OCI-LY7 (cell line): ENCODE measurements at regions of chr4 and their contacts with region 1.

Region 1: GRCh38 chr4:85696661-85697060 is 221.7 kb downstream of the ARHGAP24 start:
- DNase-seq: no peak
- H3K4me3 ChIP-seq: no peak overlapping the region
- H3K27ac ChIP-seq: no peak overlapping the region
- H3K4me1 ChIP-seq: peaks cover 37% of the 10 kb centered on the region
- CTCF ChIP-seq: no peak

Region 2: GRCh38 chr4:85438031-85438430 is 258.6 kb before region 1 on chr4:
- CTCF ChIA-PET with region 1: no interaction called
- POLR2A ChIA-PET with region 1: no interaction called
- intact Hi-C with region 1: no loop called
- DNase-seq: no peak
- H3K4me3 ChIP-seq: no peak overlapping the region
- H3K27ac ChIP-seq: no peak overlapping the region
- H3K4me1 ChIP-seq: no peaks in the 10 kb centered on the region
- CTCF ChIP-seq: no peak

Region 3: DNA sequence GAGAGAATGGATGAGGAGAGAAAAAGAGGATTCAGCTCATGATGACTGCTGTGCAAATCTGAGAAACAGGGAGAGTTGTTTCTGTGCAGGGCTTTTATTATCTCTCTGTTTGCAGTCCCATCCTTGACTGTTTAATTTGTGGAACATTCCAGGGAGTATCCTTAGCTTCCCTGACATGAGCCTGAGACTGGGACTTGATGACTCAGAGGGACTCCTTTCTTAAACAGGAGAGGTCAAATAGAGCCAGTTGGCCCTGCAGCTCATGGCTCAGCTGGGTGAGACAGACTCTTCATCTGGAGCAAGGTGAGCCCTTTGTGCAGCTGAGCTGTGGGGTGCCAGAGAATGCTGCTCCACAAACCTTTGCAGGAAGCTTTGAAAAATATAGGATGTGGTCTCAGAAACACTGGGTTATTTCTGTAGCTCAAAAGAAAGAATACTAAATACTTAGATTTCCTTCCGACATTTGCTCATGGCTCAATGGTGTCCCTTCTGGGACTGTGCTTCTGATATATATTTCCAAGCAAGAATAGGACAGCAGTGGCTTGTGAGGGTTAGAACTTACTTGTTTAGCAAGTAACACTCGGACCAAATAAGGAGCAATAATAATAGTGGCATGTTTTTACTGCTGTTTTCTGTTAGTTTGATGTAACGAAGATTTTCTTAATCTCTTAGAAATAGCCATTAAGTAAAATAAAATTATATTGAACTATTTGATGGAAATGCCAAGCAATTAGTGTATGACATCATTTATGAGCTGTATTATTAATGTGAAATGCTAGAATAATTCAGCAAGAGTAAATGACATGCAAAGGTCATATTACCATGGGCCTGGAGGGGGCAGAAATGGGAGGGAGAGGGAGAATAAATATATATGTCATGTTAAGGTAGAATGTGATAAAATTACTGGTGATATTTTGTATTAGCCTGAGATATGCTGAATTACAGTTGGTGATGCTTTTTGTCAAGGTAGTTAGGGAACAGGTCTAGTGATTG is 207.1 kb before region 1 on chr4:
- CTCF ChIA-PET with region 1: no interaction called
- POLR2A ChIA-PET with region 1: no interaction called
- intact Hi-C with region 1: no loop called
- DNase-seq: no peak
- H3K4me3 ChIP-seq: no peak overlapping the region
- H3K27ac ChIP-seq: no peak overlapping the region
- H3K4me1 ChIP-seq: peaks cover 6% of the 10 kb centered on the region
- CTCF ChIP-seq: no peak

Region 4: GRCh38 chr4:85642356-85643100 is 54.1 kb before region 1 on chr4:
- CTCF ChIA-PET with region 1: no interaction called
- POLR2A ChIA-PET with region 1: no interaction called
- intact Hi-C with region 1: no loop called
- DNase-seq: no peak
- H3K4me3 ChIP-seq: no peak overlapping the region
- H3K27ac ChIP-seq: no peak overlapping the region
- H3K4me1 ChIP-seq: no peaks in the 10 kb centered on the region
- CTCF ChIP-seq: no peak

Region 5: DNA sequence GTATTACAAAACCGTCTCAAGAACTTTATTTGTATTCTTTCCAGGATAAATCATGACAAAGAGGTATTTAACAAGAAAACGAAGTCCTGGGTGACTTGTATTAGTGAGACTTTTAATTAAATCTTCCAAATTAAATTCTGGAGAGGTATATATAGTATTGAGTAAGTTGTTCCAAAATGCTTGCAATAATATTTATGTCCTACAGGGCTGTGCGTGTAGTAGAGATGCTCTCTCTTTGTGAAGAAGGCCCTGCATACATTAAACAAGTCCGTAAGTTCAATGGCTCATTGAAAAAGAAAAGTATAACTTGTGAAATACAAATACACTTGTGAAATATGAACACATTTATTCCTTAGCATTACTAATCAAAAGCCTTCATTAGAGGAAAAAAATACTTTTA is 10.3 kb before region 1 on chr4:
- CTCF ChIA-PET with region 1: interaction called, 3 read pairs
- POLR2A ChIA-PET with region 1: interaction called, 20 read pairs
- intact Hi-C with region 1: no loop called
- DNase-seq: peak; percentile 29
- H3K4me3 ChIP-seq: no peak overlapping the region
- H3K27ac ChIP-seq: no peak overlapping the region
- H3K4me1 ChIP-seq: peaks cover 11% of the 10 kb centered on the region
- CTCF ChIP-seq: peak; percentile 52; the same call in 1 of the 2 replicates